GM12878 (cell line): ENCODE measurements at regions of chr10 and their contacts with region 1.

Region 1: GRCh38 chr10:113958631-113959382 is 84.9 kb upstream of the ADRB1 start:
- DNase-seq: no peak
- ATAC-seq: 0 out of 3 replicates have a peak, but pooled peaks have one; percentile 3
- H3K4me3 ChIP-seq: no peak overlapping the region
- H3K27ac ChIP-seq: peak overlapping the region; percentile 87
- H3K4me1 ChIP-seq: peaks cover 41% of the 10 kb centered on the region
- H3K27me3 ChIP-seq: no peaks in the 10 kb centered on the region
- CTCF ChIP-seq: no peak
- EP300 ChIP-seq: no peak
- POLR2A ChIP-seq: no peak
- RAD21 ChIP-seq: no peak

Region 2: DNA sequence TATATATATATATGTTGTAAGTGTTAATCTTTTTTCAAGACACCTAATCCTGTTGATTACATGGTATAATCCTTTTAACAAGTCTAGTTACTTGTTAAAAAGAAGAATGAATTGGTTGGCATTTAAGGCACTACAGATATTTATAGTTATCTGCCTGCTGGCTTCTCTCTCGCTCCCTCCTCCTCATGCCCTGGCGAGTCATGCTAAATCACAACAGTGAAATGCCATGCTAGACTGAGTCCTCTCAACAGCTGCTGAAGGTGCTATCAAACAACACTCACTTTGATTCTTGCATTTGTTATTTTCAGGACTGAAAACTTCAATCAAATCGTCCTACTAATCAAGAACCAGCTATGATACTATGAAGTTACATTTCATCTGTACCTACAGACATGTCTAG is 310.3 kb before region 1 on chr10:
- CTCF ChIA-PET with region 1: no interaction called
- POLR2A ChIA-PET with region 1: no interaction called
- RAD21 ChIA-PET with region 1: no interaction called
- SMC1A ChIA-PET with region 1: no interaction called
- in situ Hi-C with region 1: no loop called
- intact Hi-C with region 1: no loop called
- DNase-seq: no peak
- ATAC-seq: no peak
- H3K4me3 ChIP-seq: no peak overlapping the region
- H3K27ac ChIP-seq: no peak overlapping the region
- H3K4me1 ChIP-seq: no peaks in the 10 kb centered on the region
- H3K27me3 ChIP-seq: no peaks in the 10 kb centered on the region; a peak in 1 of 4 replicates
- CTCF ChIP-seq: no peak
- EP300 ChIP-seq: no peak
- POLR2A ChIP-seq: no peak
- RAD21 ChIP-seq: no peak

Region 3: GRCh38 chr10:113854011-113854760 is 104.6 kb before region 1 on chr10 and contains the starts of genes DCLRE1A and NHLRC2:
- CTCF ChIA-PET with region 1: interaction called, 6 read pairs
- POLR2A ChIA-PET with region 1: interaction called, 8 read pairs
- RAD21 ChIA-PET with region 1: interaction called, 31 read pairs
- SMC1A ChIA-PET with region 1: interaction called, 13 read pairs
- in situ Hi-C with region 1: no loop called
- intact Hi-C with region 1: loop called (anchors 5 kb)
- DNase-seq: no peak
- ATAC-seq: peak; percentile 55
- H3K4me3 ChIP-seq: peak within 1 kb of the TSS; percentile 78
- H3K27ac ChIP-seq: peak within 1 kb of the TSS; percentile 92
- H3K4me1 ChIP-seq: peaks cover 4% of the 10 kb centered on the region; the same call in 1 of the 2 replicates
- H3K27me3 ChIP-seq: no peaks in the 10 kb centered on the region
- CTCF ChIP-seq: no peak
- EP300 ChIP-seq: peak in 1 of 2 experiments; percentile 99; a peak in 2 of 4 replicates
- POLR2A ChIP-seq: no peak
- RAD21 ChIP-seq: no peak
- polyA plus RNA-seq, gene DCLRE1A: 4.8 to 5.2 TPM
- polyA plus RNA-seq, gene NHLRC2: 1.9 to 3.9 TPM

Region 4: GRCh38 chr10:113879691-113880090 is 79.1 kb before region 1 on chr10:
- CTCF ChIA-PET with region 1: no interaction called
- POLR2A ChIA-PET with region 1: interaction called, 3 read pairs
- RAD21 ChIA-PET with region 1: interaction called, 5 read pairs
- SMC1A ChIA-PET with region 1: interaction called, 5 read pairs
- in situ Hi-C with region 1: no loop called
- intact Hi-C with region 1: loop called (anchors 5 kb)
- DNase-seq: peak; percentile 48
- ATAC-seq: peak; percentile 90
- H3K4me3 ChIP-seq: peak overlapping the region; percentile 47
- H3K27ac ChIP-seq: peak overlapping the region; percentile 86
- H3K4me1 ChIP-seq: peaks cover 25% of the 10 kb centered on the region
- H3K27me3 ChIP-seq: no peaks in the 10 kb centered on the region
- CTCF ChIP-seq: no peak
- EP300 ChIP-seq: peak; percentile 73 to 77; a peak in 2 of 4 replicates
- POLR2A ChIP-seq: no peak
- RAD21 ChIP-seq: no peak

Region 5: GRCh38 chr10:113982769-113983168 is 24.0 kb after region 1 on chr10:
- CTCF ChIA-PET with region 1: interaction called, 6 read pairs
- POLR2A ChIA-PET with region 1: interaction called, 12 read pairs
- RAD21 ChIA-PET with region 1: interaction called, 26 read pairs
- SMC1A ChIA-PET with region 1: interaction called, 32 read pairs
- in situ Hi-C with region 1: no loop called
- intact Hi-C with region 1: no loop called
- DNase-seq: no peak
- ATAC-seq: peak; percentile 94
- H3K4me3 ChIP-seq: no peak overlapping the region
- H3K27ac ChIP-seq: peak overlapping the region; percentile 60
- H3K4me1 ChIP-seq: peaks cover 21% of the 10 kb centered on the region
- H3K27me3 ChIP-seq: no peaks in the 10 kb centered on the region
- CTCF ChIP-seq: no peak
- EP300 ChIP-seq: no peak
- POLR2A ChIP-seq: no peak
- RAD21 ChIP-seq: no peak

Region 6: DNA sequence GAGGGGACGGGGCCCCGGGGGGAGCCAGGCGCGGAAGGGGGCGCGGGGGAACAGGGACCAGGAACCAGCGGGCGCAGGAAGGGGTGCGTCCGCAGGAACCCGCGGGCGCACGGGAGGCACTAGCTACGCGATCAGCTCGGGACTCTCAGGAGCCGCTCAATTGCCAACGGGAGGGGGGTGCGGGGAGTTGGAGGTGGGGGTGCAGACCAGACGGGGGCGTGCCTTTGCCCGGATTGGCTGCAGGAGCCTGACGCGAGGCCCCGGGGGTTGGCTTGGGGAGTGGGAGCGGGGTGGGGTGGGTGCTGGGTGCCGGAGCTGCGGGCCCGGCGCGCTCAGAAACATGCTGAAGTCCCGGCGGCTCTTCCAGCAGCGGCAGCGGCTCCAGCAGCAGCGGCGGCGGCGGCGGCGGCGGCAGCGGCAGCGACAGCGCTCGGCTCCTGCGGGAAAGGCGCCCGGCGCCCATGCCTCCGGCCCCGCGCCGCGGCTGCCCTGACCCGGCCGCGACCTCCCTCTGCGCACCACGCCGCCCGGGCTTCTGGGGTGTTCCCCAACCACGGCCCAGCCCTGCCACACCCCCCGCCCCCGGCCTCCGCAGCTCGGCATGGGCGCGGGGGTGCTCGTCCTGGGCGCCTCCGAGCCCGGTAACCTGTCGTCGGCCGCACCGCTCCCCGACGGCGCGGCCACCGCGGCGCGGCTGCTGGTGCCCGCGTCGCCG is 84.9 kb after region 1 on chr10 and contains the start of gene ADRB1:
- CTCF ChIA-PET with region 1: no interaction called
- POLR2A ChIA-PET with region 1: interaction called, 3 read pairs
- RAD21 ChIA-PET with region 1: interaction called, 15 read pairs
- SMC1A ChIA-PET with region 1: no interaction called
- in situ Hi-C with region 1: no loop called
- intact Hi-C with region 1: no loop called
- DNase-seq: peak; percentile 26
- ATAC-seq: peak; percentile 85
- H3K4me3 ChIP-seq: peak within 1 kb of the TSS; percentile 78
- H3K27ac ChIP-seq: no peak within 1 kb of the TSS
- H3K4me1 ChIP-seq: peaks cover 5% of the 10 kb centered on the region
- H3K27me3 ChIP-seq: peaks cover 0 to 3% of the 10 kb centered on the region in 2 experiments; a peak in 2 of 4 replicates
- CTCF ChIP-seq: no peak
- EP300 ChIP-seq: no peak
- POLR2A ChIP-seq: peak; percentile 78
- RAD21 ChIP-seq: no peak
- polyA plus RNA-seq, gene ADRB1: 0.99 to 2.8 TPM

Region 7: DNA sequence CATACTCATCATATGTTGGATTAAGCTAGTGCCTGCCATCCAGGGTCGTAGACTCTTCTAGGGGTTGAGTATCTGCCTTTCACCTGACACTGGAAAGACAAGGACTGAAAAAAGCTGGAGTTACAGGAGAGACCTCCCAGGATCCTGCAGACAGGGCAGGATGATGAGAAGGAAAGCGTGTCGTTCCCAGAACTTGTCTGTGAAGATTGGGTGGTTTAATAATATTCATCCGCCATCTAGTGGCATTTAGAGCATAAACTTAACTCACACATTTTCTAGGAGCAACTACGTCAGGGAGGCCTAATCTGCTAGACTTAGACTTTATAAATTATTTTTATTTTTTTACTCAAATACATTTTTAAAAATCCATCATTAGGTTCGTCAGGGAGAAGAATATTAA is 144.5 kb after region 1 on chr10:
- CTCF ChIA-PET with region 1: interaction called, 6 read pairs
- POLR2A ChIA-PET with region 1: no interaction called
- RAD21 ChIA-PET with region 1: interaction called, 11 read pairs
- SMC1A ChIA-PET with region 1: interaction called, 7 read pairs
- in situ Hi-C with region 1: no loop called
- intact Hi-C with region 1: no loop called
- DNase-seq: peak; percentile 23
- ATAC-seq: peak; percentile 68
- H3K4me3 ChIP-seq: no peak overlapping the region
- H3K27ac ChIP-seq: no peak overlapping the region
- H3K4me1 ChIP-seq: peaks cover 28% of the 10 kb centered on the region
- H3K27me3 ChIP-seq: no peaks in the 10 kb centered on the region; a peak in 2 of 4 replicates
- CTCF ChIP-seq: peak; percentile 39 to 79 (median 60); a peak in 5 of 6 replicates
- EP300 ChIP-seq: no peak
- POLR2A ChIP-seq: no peak
- RAD21 ChIP-seq: peak; percentile 91